ENCODE measurements at regions of chr2 and their contacts with region 1.

Region 1: GRCh38 chr2:121071034-121071504 is 213.9 kb downstream of the TFCP2L1 start:
- DNase-seq: peak; percentile 29 to 45 (median 37)
- H3K4me3 ChIP-seq: no peak overlapping the region
- H3K27ac ChIP-seq: no peak overlapping the region
- H3K4me1 ChIP-seq: no peaks in the 10 kb centered on the region
- H3K27me3 ChIP-seq: peaks cover 0 to 49% (median 27%) of the 10 kb centered on the region in 5 experiments

Region 2: GRCh38 chr2:120699292-120699691 is 371.8 kb before region 1 on chr2:
- CTCF ChIA-PET with region 1: interaction called, 18 read pairs
- POLR2A ChIA-PET with region 1: interaction called, 6 read pairs
- DNase-seq: no peak
- H3K4me3 ChIP-seq: no peak overlapping the region
- H3K27ac ChIP-seq: no peak overlapping the region
- H3K4me1 ChIP-seq: peaks cover 0 to 15% (median 0%) of the 10 kb centered on the region in 4 experiments
- H3K27me3 ChIP-seq: peaks cover 6 to 57% (median 10%) of the 10 kb centered on the region in 5 experiments

Region 3: GRCh38 chr2:120992791-120993555 is 78.1 kb before region 1 on chr2:
- CTCF ChIA-PET with region 1: no interaction called
- POLR2A ChIA-PET with region 1: no interaction called
- DNase-seq: no peak
- H3K4me3 ChIP-seq: no peak overlapping the region
- H3K27ac ChIP-seq: no peak overlapping the region
- H3K4me1 ChIP-seq: no peaks in the 10 kb centered on the region
- H3K27me3 ChIP-seq: no peaks in the 10 kb centered on the region

Region 4: GRCh38 chr2:121018136-121019061 is 52.7 kb before region 1 on chr2:
- CTCF ChIA-PET with region 1: no interaction called
- POLR2A ChIA-PET with region 1: no interaction called
- DNase-seq: peak in 1 of 3 donors; percentile 14
- H3K4me3 ChIP-seq: peak overlapping the region in 1 of 7 experiments; percentile 5
- H3K27ac ChIP-seq: no peak overlapping the region
- H3K4me1 ChIP-seq: no peaks in the 10 kb centered on the region
- H3K27me3 ChIP-seq: peaks cover 0 to 12% (median 2%) of the 10 kb centered on the region in 5 experiments

Region 5: GRCh38 chr2:121058852-121059558 is 12.1 kb before region 1 on chr2:
- CTCF ChIA-PET with region 1: interaction called, 19 read pairs
- POLR2A ChIA-PET with region 1: no interaction called
- DNase-seq: no peak
- H3K4me3 ChIP-seq: no peak overlapping the region
- H3K27ac ChIP-seq: no peak overlapping the region
- H3K4me1 ChIP-seq: no peaks in the 10 kb centered on the region
- H3K27me3 ChIP-seq: peaks cover 0 to 8% (median 4%) of the 10 kb centered on the region in 5 experiments

Region 6: DNA sequence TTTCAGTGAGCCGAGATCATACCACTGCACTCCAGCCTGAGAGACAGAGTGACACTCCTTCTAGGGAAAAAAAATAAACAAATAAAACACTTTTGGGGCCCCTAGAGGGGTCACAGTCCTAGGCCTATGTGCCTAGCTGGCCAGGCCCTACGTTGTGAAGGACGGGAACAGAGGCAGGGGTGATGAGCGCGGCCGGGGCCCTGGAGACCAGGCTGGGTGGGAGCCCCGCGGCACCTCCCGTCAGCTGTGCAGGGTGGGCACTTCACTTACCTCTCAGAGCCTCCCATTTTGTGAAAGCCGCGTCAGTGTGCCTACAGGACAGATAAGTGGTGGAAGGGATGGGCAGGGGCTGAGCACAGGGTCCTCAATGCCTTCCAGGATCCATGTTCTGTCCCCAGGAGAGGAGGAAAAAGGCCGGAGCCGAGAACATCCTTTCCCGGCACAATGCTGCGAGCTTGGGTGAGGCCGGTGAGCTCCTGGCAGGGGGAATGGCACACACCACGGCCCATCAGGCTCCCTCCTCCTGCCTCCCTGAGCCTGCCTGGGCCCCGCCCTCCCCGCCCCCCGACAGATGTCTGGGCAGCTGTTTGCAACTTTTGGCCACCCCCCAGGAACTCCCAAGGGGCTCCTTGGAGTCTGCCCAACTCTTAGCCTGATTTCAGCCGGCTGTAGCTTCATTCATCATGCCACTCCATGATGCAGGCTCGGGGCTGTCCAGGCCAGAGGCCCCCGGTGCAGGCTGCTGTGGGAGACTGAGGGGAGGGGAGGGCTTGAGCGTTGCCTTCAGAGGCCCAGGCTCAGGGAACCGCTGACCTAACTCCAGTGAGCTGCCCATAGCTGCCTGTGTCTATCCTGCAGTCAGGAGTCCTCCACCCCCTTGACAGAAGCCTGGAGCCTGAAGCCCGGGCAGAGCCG is 17.4 kb after region 1 on chr2:
- CTCF ChIA-PET with region 1: interaction called, 33 read pairs
- POLR2A ChIA-PET with region 1: interaction called, 3 read pairs
- DNase-seq: no peak
- H3K4me3 ChIP-seq: no peak overlapping the region
- H3K27ac ChIP-seq: no peak overlapping the region
- H3K4me1 ChIP-seq: no peaks in the 10 kb centered on the region
- H3K27me3 ChIP-seq: peaks cover 0 to 4% (median 0%) of the 10 kb centered on the region in 5 experiments

Measured in common myeloid progenitor, CD34-positive (primary cell).